ENCODE measurements at regions of chr3 and their contacts with region 1.

Region 1: DNA sequence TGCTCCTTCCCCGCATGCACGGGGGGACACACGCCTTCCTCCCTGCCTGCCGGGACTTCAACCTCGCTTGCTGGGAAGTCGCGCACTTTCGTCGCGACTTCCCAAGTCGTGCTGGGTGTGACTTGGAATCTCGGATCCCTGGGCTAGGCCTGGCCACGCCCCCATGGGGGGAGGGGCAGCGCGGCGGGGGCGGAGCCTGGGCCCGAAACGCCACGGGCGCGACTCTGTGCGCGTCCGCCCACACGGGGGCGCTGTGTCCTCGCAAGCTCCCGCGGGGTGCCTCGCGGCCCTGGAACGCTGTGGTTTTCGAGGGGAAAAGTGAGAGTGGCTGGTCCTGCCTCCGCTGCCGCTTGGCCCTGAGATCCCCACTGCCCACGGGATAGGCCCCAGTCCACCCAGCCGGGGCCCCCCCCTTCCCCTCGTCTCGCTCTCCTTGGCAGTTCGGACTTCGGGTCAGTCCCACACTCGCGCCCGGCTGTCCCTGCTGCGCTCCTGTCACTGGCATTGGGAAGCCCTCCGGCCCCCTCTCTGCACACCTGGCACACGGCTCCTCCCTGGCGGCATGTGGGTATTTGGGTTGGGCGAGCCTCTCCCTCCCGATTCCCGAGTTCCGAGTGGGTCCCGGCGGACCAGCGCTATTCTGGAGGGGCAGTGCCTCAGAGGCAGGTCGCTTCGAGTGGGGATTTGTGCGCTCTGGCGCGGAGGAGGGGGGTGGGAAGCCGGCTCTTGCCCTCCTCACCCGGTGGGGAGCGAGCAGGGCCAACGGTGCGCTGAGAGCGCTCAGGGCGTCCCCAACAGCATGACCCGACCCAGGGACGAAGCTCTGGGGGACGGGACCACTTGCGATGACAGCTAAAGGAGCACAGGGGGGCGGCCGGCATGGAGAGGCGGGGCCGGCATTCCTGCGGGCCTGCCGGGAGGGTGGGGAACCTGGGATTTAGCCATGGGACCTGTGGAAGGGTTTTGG is 23.6 kb downstream of the SEC61A1 start:
- DNase-seq: peak; percentile 72 to 91 (median 87)
- ATAC-seq: peak; percentile 91
- H3K4me3 ChIP-seq: peak overlapping the region; percentile 56 to 73
- H3K4me3 Mint-ChIP-seq: peak overlapping the region; percentile 73
- H3K27ac ChIP-seq: no peak overlapping the region
- H3K27ac Mint-ChIP-seq: no peak overlapping the region
- H3K4me1 ChIP-seq: peaks cover 14% of the 10 kb centered on the region
- H3K4me1 Mint-ChIP-seq: peaks cover 7% of the 10 kb centered on the region
- H3K27me3 ChIP-seq: peaks cover 0 to 4% of the 10 kb centered on the region in 2 experiments
- H3K27me3 Mint-ChIP-seq: peaks cover 3% of the 10 kb centered on the region
- CTCF ChIP-seq: peak; percentile 94

Region 2: DNA sequence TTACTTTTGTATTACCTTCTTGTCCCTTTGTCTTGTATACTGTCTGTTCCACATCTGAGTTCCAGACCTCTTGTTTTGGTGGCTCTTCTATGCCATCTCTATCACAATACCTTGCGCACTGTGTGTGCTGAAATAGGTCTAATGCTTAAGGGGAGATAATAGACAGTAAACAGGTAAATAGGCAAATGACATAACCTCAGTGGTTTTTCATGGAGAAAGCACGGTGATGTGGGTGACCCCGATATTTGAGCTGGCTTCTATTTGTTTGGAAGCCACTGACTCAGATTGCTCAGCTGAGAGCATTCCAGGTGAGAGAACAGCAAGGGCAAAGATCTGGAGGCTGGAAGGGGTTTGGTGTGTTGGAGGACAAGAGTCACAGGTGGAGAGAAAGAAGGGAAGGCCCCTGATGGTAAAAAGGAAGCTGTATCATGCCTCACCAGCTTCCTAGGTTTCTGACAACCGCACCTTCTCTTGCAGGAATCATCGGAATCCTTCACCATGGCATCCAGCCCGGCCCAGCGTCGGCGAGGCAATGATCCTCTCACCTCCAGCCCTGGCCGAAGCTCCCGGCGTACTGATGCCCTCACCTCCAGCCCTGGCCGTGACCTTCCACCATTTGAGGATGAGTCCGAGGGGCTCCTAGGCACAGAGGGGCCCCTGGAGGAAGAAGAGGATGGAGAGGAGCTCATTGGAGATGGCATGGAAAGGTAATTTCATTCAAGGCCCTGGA is 476.8 kb before region 1 on chr3:
- CTCF ChIA-PET with region 1: no interaction called
- POLR2A ChIA-PET with region 1: no interaction called
- intact Hi-C with region 1: loop called in 1 of 2 experiments (anchors 2 kb)
- DNase-seq: no peak
- ATAC-seq: no peak
- H3K4me3 ChIP-seq: peak overlapping the region; percentile 53 to 60
- H3K4me3 Mint-ChIP-seq: peak overlapping the region; percentile 78
- H3K27ac ChIP-seq: peak overlapping the region; percentile 53 to 69
- H3K27ac Mint-ChIP-seq: peak overlapping the region; percentile 76
- H3K4me1 ChIP-seq: peaks cover 11% of the 10 kb centered on the region
- H3K4me1 Mint-ChIP-seq: peaks cover 15% of the 10 kb centered on the region
- H3K27me3 ChIP-seq: no peaks in the 10 kb centered on the region
- H3K27me3 Mint-ChIP-seq: no peaks in the 10 kb centered on the region
- CTCF ChIP-seq: no peak

Region 3: GRCh38 chr3:128095222-128095703 is 19.5 kb after region 1 on chr3:
- CTCF ChIA-PET with region 1: interaction called, 10 read pairs
- POLR2A ChIA-PET with region 1: no interaction called
- intact Hi-C with region 1: no loop called
- DNase-seq: peak; percentile 65 to 87 (median 80)
- ATAC-seq: peak; percentile 99
- H3K4me3 ChIP-seq: no peak overlapping the region
- H3K4me3 Mint-ChIP-seq: no peak overlapping the region
- H3K27ac ChIP-seq: no peak overlapping the region
- H3K27ac Mint-ChIP-seq: peak overlapping the region; percentile 42
- H3K4me1 ChIP-seq: peaks cover 6% of the 10 kb centered on the region
- H3K4me1 Mint-ChIP-seq: peaks cover 11% of the 10 kb centered on the region
- H3K27me3 ChIP-seq: no peaks in the 10 kb centered on the region
- H3K27me3 Mint-ChIP-seq: no peaks in the 10 kb centered on the region
- CTCF ChIP-seq: peak; percentile 69

Region 4: GRCh38 chr3:128133273-128134084 is 57.7 kb after region 1 on chr3:
- CTCF ChIA-PET with region 1: interaction called, 6 read pairs
- POLR2A ChIA-PET with region 1: no interaction called
- intact Hi-C with region 1: loop called in 1 of 2 experiments (anchors 1 kb)
- DNase-seq: peak; percentile 18 to 75 (median 57)
- ATAC-seq: peak; percentile 77
- H3K4me3 ChIP-seq: no peak overlapping the region
- H3K4me3 Mint-ChIP-seq: no peak overlapping the region
- H3K27ac ChIP-seq: no peak overlapping the region
- H3K27ac Mint-ChIP-seq: no peak overlapping the region
- H3K4me1 ChIP-seq: no peaks in the 10 kb centered on the region
- H3K4me1 Mint-ChIP-seq: no peaks in the 10 kb centered on the region
- H3K27me3 ChIP-seq: no peaks in the 10 kb centered on the region
- H3K27me3 Mint-ChIP-seq: peaks cover 3% of the 10 kb centered on the region
- CTCF ChIP-seq: peak; percentile 58

Region 5: DNA sequence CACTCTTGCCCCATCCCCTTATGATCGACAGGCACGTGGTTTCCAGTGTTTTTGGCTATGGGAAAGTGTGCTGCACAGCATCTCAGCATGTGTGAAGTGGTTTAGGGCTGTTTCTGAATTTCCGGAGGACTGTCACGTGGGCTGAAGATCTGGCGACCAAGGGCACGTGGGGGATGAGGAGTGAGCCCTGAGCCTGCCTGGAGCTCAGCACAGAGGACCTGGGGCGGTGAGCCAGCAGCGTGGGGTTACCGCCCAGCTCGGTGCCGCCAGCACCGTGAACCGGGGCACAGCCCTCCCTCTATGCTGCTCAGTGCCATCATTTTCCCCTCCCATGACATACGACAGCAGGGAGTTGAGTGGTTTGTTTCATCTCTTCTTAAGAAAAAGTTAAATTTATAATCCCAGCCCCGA is 240.7 kb after region 1 on chr3:
- CTCF ChIA-PET with region 1: interaction called, 3 read pairs
- POLR2A ChIA-PET with region 1: no interaction called
- intact Hi-C with region 1: loop called in 1 of 2 experiments (anchors 5 kb)
- DNase-seq: peak; percentile 21 to 89 (median 70)
- ATAC-seq: peak; percentile 97
- H3K4me3 ChIP-seq: peak overlapping the region in 1 of 2 experiments; percentile 6
- H3K4me3 Mint-ChIP-seq: peak overlapping the region; percentile 36
- H3K27ac ChIP-seq: peak overlapping the region; percentile 50 to 68
- H3K27ac Mint-ChIP-seq: peak overlapping the region; percentile 87
- H3K4me1 ChIP-seq: peaks cover 86% of the 10 kb centered on the region
- H3K4me1 Mint-ChIP-seq: peaks cover 86% of the 10 kb centered on the region
- H3K27me3 ChIP-seq: no peaks in the 10 kb centered on the region
- H3K27me3 Mint-ChIP-seq: no peaks in the 10 kb centered on the region
- CTCF ChIP-seq: no peak

Region 6: GRCh38 chr3:128497387-128498126 is 421.8 kb after region 1 on chr3:
- CTCF ChIA-PET with region 1: interaction called, 3 read pairs
- POLR2A ChIA-PET with region 1: no interaction called
- intact Hi-C with region 1: loop called (anchors 1 to 5 kb)
- DNase-seq: peak; percentile 31 to 83 (median 63)
- ATAC-seq: peak; percentile 64
- H3K4me3 ChIP-seq: peak overlapping the region; percentile 47 to 52
- H3K4me3 Mint-ChIP-seq: peak overlapping the region; percentile 80
- H3K27ac ChIP-seq: no peak overlapping the region
- H3K27ac Mint-ChIP-seq: no peak overlapping the region
- H3K4me1 ChIP-seq: peaks cover 9% of the 10 kb centered on the region
- H3K4me1 Mint-ChIP-seq: peaks cover 9% of the 10 kb centered on the region
- H3K27me3 ChIP-seq: peaks cover 18 to 19% of the 10 kb centered on the region in 2 experiments
- H3K27me3 Mint-ChIP-seq: peaks cover 53% of the 10 kb centered on the region
- CTCF ChIP-seq: peak; percentile 76

Region 7: DNA sequence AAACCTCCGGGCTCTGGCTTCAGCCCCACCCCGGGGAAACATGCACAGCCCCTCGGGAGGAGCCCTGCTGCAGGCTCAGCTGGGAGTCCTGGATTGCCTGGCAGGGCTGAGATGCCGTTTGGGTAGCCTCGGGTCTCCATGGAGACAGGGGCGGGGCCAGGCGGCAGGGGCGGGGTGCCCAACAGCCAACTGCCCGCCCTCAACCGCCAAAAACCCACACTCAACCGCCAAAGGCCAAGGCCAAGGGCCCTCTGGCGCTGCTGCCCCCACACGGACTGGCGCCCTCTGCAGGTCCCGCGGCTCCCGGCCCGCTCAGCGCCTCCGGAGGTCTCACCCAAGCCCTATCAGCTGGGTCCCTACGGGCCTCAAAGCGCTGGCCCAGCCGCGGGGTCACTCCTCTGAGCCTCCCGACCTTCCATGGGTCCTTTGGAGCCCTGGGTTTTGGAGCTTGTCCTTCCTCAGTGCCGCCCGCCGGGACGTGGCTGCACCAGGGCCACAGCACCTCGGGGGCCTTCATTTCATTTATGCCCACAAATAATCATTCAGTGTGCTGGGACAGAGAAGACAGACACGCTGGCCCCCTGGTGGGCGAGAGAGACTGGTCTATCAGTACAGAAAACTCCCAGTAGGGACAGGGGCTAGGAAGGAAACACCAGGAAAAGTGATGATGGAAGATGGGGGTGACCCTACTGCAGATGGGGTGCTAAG is 770.1 kb after region 1 on chr3:
- CTCF ChIA-PET with region 1: no interaction called
- POLR2A ChIA-PET with region 1: no interaction called
- intact Hi-C with region 1: loop called in 1 of 2 experiments (anchors 5 kb)
- DNase-seq: peak; percentile 58 to 85 (median 79)
- ATAC-seq: peak; percentile 82
- H3K4me3 ChIP-seq: peak overlapping the region; percentile 51 to 74
- H3K4me3 Mint-ChIP-seq: peak overlapping the region; percentile 80
- H3K27ac ChIP-seq: peak overlapping the region; percentile 17 to 45
- H3K27ac Mint-ChIP-seq: peak overlapping the region; percentile 78
- H3K4me1 ChIP-seq: peaks cover 19% of the 10 kb centered on the region
- H3K4me1 Mint-ChIP-seq: peaks cover 9% of the 10 kb centered on the region
- H3K27me3 ChIP-seq: no peaks in the 10 kb centered on the region
- H3K27me3 Mint-ChIP-seq: no peaks in the 10 kb centered on the region
- CTCF ChIP-seq: peak; percentile 75